ENCODE measurements at regions of chr3 and their contacts with region 1.

Region 1: DNA sequence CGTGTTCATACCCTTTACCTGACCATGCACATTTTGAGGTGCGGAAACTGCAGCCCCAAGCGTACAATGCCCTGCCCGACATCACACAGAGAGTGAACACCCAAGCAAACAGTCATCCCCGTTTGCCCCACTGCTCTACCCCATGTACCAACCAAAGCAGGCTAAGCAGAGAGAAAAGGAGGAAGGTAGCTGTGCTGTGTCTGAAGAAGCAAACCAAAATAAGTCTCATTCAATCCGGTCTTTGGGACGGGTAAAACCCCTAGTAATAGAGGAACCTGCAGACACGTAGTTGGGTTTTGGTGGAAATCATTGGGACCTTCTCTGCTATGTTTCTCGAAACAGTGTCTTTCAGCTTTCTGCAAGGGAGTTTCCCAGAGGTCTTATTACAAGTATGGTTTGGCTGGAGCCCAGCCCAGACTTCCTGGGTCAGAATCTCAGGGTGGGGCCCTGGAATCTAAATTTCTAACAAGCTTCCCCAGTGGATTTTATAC is 164.6 kb upstream of the HES1 start:
- DNase-seq: no peak
- H3K4me3 ChIP-seq: no peak overlapping the region
- H3K27ac ChIP-seq: no peak overlapping the region
- H3K4me1 ChIP-seq: peaks cover 20% of the 10 kb centered on the region
- H3K27me3 ChIP-seq: no peaks in the 10 kb centered on the region
- CTCF ChIP-seq: no peak
- POLR2A ChIP-seq: no peak

Region 2: GRCh38 chr3:193693774-193694173 is 277.5 kb before region 1 on chr3:
- CTCF ChIA-PET with region 1: no interaction called
- POLR2A ChIA-PET with region 1: no interaction called
- dilution Hi-C with region 1: no loop called
- intact Hi-C with region 1: no loop called
- DNase-seq: no peak
- H3K4me3 ChIP-seq: no peak overlapping the region
- H3K27ac ChIP-seq: no peak overlapping the region
- H3K4me1 ChIP-seq: no peaks in the 10 kb centered on the region
- H3K27me3 ChIP-seq: no peaks in the 10 kb centered on the region
- CTCF ChIP-seq: no peak
- POLR2A ChIP-seq: no peak

Region 3: DNA sequence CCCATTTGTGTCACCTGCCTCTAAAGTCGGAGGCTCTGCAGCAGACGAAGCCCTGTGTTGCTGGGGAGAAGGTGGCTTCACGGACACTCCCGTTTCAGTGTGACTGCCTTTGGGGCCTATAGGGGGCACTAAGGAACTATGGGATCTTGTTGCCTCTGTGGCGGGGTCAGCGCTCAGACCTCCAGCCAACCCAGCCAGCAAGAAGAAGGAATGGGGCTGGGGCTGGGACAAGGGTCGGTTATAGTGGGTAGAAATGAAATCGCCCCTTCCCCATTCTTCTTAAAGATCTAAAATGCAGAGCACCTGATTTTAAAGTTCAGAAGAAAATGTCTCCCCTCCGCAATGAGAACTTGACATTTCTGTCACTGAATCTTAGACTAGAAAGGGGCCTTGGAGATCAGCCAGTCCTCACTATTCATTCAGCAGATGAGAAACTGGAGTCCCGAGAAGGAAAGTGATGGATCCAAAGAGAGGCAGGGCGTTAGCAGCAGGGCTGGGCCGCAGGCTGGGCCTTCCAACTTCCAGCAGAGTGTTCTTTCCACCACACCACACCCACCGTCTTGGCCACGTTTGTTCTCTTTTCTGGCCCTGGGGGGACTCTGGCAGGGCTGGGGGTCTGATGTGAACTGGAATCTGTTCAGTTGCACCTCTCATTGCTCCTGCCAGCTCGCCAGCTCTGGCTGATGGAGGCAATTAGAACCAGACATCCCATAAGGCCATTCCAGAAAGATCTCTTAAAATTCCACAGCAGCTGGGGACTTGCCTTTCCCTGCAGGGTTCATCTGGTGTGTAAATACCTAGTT is 182.9 kb before region 1 on chr3:
- CTCF ChIA-PET with region 1: interaction called, 7 read pairs
- POLR2A ChIA-PET with region 1: no interaction called
- dilution Hi-C with region 1: no loop called
- intact Hi-C with region 1: loop called (anchors 1 kb)
- DNase-seq: peak; percentile 76
- H3K4me3 ChIP-seq: no peak overlapping the region
- H3K27ac ChIP-seq: no peak overlapping the region
- H3K4me1 ChIP-seq: peaks cover 5% of the 10 kb centered on the region
- H3K27me3 ChIP-seq: peaks cover 0 to 1% of the 10 kb centered on the region in 2 experiments
- CTCF ChIP-seq: peak; percentile 82 to 88
- POLR2A ChIP-seq: no peak

Region 4: DNA sequence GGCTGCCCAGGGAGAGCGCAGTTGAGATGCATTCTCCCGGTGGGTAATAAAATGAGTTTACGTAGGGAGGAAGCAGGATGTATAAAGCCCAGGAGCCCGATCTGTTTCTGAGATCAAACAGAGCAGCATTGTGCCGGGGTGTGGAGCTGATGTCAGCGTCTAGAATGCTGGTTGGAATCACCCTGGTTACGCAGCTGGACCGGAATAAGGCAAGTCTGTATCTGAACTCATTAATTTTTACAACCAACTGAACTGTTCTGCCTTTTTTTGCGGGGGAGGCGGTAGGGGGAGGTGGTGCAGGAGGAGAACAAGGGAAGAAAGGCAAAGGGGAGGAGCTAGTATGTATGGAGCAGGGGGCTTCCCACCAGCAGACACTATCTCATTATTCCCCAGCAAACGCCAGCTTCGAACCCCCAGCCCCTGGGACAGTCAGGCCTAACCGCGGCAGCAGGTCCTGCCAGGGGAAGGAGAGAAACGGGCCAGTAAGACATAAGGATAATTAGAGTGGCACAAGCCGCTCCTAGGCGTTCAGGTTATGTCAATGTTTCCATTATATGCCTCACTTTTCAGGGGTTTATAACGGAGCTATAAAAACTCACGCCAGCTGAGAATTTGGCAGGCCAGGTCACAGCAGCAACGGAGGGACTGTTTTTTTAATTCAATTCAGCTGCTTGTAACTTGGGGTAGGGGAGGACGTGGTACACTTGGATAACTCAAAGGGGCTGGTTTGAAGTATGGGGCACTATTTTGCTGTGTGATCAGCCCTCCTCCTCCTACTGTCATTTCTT is 10.6 kb before region 1 on chr3:
- CTCF ChIA-PET with region 1: interaction called, 13 read pairs
- POLR2A ChIA-PET with region 1: interaction called, 3 read pairs
- dilution Hi-C with region 1: no loop called
- intact Hi-C with region 1: loop called (anchors 1 kb)
- DNase-seq: peak; percentile 67
- H3K4me3 ChIP-seq: no peak overlapping the region
- H3K27ac ChIP-seq: no peak overlapping the region
- H3K4me1 ChIP-seq: no peaks in the 10 kb centered on the region
- H3K27me3 ChIP-seq: peaks cover 26 to 33% of the 10 kb centered on the region in 2 experiments
- CTCF ChIP-seq: no peak
- POLR2A ChIP-seq: no peak

Region 5: GRCh38 chr3:193982258-193982659 is 11.0 kb after region 1 on chr3:
- CTCF ChIA-PET with region 1: interaction called, 20 read pairs
- POLR2A ChIA-PET with region 1: no interaction called
- dilution Hi-C with region 1: no loop called
- intact Hi-C with region 1: loop called (anchors 1 kb)
- DNase-seq: peak; percentile 43
- H3K4me3 ChIP-seq: no peak overlapping the region
- H3K27ac ChIP-seq: no peak overlapping the region
- H3K4me1 ChIP-seq: peaks cover 27% of the 10 kb centered on the region
- H3K27me3 ChIP-seq: no peaks in the 10 kb centered on the region
- CTCF ChIP-seq: no peak
- POLR2A ChIP-seq: no peak

Region 6: GRCh38 chr3:193992425-193993037 is 21.2 kb after region 1 on chr3:
- CTCF ChIA-PET with region 1: no interaction called
- POLR2A ChIA-PET with region 1: no interaction called
- dilution Hi-C with region 1: no loop called
- intact Hi-C with region 1: no loop called
- DNase-seq: no peak
- H3K4me3 ChIP-seq: no peak overlapping the region
- H3K27ac ChIP-seq: no peak overlapping the region
- H3K4me1 ChIP-seq: peaks cover 2% of the 10 kb centered on the region
- H3K27me3 ChIP-seq: peaks cover 0 to 2% of the 10 kb centered on the region in 2 experiments
- CTCF ChIP-seq: no peak
- POLR2A ChIP-seq: no peak

Region 7: DNA sequence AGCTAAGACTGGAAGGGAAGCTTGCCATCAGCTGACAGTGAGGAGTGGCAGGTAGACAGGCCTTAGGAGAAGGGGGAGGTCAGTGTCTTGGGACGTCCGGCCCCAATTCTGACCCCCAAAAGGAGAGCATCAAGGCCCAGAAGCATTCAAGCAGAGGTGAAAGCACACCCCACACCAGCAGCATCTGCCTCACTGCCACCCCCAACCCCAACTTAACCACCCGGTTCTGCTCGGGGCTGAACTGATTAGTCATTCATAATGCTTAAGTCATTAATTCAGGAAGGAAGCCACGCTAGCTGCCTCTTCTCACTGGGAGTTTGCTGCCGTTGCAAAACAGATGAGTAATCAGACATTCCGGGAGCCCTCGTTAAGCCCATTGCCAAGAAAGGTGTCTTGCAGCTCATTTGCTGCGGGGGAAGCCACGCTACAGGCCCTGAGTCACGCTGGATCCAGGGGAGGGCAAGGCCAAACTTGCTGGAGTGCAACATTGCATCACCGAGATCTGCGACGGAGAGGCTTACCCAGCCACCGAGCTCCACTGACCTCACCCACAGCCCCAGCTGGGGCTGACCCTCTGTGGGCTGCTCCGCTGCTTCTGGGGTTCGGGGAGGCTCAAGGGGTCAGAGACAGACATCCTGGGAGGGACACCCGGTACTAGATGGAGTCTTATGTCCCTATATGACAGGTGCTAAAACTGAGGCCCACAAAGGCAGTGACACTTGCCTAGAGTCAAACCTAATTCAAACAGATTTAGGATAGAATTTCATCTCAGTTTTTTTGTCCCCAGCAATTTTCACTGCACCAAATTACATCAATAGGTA is 118.3 kb after region 1 on chr3:
- CTCF ChIA-PET with region 1: no interaction called
- POLR2A ChIA-PET with region 1: no interaction called
- dilution Hi-C with region 1: no loop called
- intact Hi-C with region 1: loop called (anchors 2 kb)
- DNase-seq: peak; percentile 99
- H3K4me3 ChIP-seq: no peak overlapping the region
- H3K27ac ChIP-seq: peak overlapping the region; percentile 94
- H3K4me1 ChIP-seq: peaks cover 22% of the 10 kb centered on the region
- H3K27me3 ChIP-seq: no peaks in the 10 kb centered on the region
- CTCF ChIP-seq: no peak
- POLR2A ChIP-seq: no peak

Region 8: GRCh38 chr3:194161131-194162045 is 190.1 kb after region 1 on chr3:
- CTCF ChIA-PET with region 1: no interaction called
- POLR2A ChIA-PET with region 1: no interaction called
- dilution Hi-C with region 1: no loop called
- intact Hi-C with region 1: no loop called
- DNase-seq: no peak
- H3K4me3 ChIP-seq: no peak overlapping the region
- H3K27ac ChIP-seq: no peak overlapping the region
- H3K4me1 ChIP-seq: peaks cover under 1% of the 10 kb centered on the region
- H3K27me3 ChIP-seq: peaks cover 16 to 19% of the 10 kb centered on the region in 2 experiments
- CTCF ChIP-seq: no peak
- POLR2A ChIP-seq: no peak